Ascending aorta (tissue), 2 donors: ENCODE measurements at regions of chr6 and their contacts with region 1.

Region 1: GRCh38 chr6:168388641-168389381 is 52.2 kb upstream of the SMOC2 start:
- DNase-seq: no peak
- H3K4me3 ChIP-seq: no peak overlapping the region
- H3K27ac ChIP-seq: no peak overlapping the region
- H3K4me1 ChIP-seq: peaks cover 0 to 10% of the 10 kb centered on the region in 2 donors
- H3K27me3 ChIP-seq: no peaks in the 10 kb centered on the region
- CTCF ChIP-seq: no peak

Region 2: GRCh38 chr6:168440520-168441433 is 52.0 kb after region 1 on chr6 and contains the start of gene SMOC2:
- intact Hi-C with region 1: loop called (anchors 2 kb)
- DNase-seq: peak in 1 of 2 donors; percentile 72
- H3K4me3 ChIP-seq: peak within 1 kb of the TSS; percentile 59 to 93
- H3K27ac ChIP-seq: peak within 1 kb of the TSS; percentile 75 to 88
- H3K4me1 ChIP-seq: peaks cover 8 to 16% of the 10 kb centered on the region in 2 donors
- H3K27me3 ChIP-seq: no peaks in the 10 kb centered on the region
- CTCF ChIP-seq: no peak
- total RNA-seq, gene SMOC2: 102 TPM

Region 3: DNA sequence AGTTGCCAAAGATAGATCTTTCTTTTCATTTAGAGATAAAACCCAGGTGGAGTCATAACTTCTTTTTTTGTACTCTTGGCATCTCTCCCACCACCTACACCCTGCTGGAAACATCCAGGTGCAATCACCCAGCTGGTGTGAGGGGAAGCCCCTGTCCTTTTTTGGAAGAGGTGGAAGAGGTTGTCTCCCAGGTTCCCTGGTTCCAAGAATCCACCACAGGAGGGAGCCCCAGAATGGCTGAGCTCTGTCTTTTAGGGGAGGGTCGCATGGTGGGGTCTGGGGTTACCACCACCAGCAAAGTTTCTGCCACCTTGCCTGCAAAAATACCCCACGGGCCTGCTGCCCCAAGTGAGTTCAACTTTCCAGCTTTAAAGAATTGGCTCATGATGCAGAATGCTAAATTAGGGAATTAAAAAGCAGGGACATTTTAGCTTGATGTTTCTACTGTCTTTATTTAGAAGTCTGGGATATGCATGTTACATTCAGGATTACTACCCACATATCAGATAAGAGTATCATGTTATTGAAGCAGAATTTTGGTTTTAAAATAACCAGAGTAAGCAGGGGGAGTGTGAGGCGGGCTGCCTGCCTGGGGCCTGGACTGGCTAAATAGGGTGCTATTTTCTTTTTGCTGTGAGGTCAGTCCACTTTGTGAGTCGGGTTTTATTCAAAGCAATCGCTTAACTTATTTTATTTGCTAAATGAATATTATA is 63.1 kb after region 1 on chr6:
- intact Hi-C with region 1: loop called (anchors 5 kb)
- DNase-seq: no peak
- H3K4me3 ChIP-seq: peak overlapping the region in 1 of 2 donors; percentile 36
- H3K27ac ChIP-seq: peak overlapping the region; percentile 90 to 94
- H3K4me1 ChIP-seq: peaks cover 24 to 46% of the 10 kb centered on the region in 2 donors
- H3K27me3 ChIP-seq: no peaks in the 10 kb centered on the region
- CTCF ChIP-seq: peak in 2 of 3 experiments; percentile 8 to 43

Region 4: GRCh38 chr6:168526841-168527281 is 138.1 kb after region 1 on chr6:
- intact Hi-C with region 1: loop called (anchors 5 kb)
- DNase-seq: peak in 1 of 2 donors; percentile 83
- H3K4me3 ChIP-seq: no peak overlapping the region
- H3K27ac ChIP-seq: peak overlapping the region; percentile 90 to 95
- H3K4me1 ChIP-seq: peaks cover 14 to 32% of the 10 kb centered on the region in 2 donors
- H3K27me3 ChIP-seq: no peaks in the 10 kb centered on the region
- CTCF ChIP-seq: no peak

Region 5: GRCh38 chr6:168542301-168542700 is 153.5 kb after region 1 on chr6:
- intact Hi-C with region 1: loop called (anchors 2 kb)
- DNase-seq: no peak
- H3K4me3 ChIP-seq: no peak overlapping the region
- H3K27ac ChIP-seq: peak overlapping the region; percentile 67 to 71
- H3K4me1 ChIP-seq: peaks cover 13 to 47% of the 10 kb centered on the region in 2 donors
- H3K27me3 ChIP-seq: no peaks in the 10 kb centered on the region
- CTCF ChIP-seq: no peak

Region 6: DNA sequence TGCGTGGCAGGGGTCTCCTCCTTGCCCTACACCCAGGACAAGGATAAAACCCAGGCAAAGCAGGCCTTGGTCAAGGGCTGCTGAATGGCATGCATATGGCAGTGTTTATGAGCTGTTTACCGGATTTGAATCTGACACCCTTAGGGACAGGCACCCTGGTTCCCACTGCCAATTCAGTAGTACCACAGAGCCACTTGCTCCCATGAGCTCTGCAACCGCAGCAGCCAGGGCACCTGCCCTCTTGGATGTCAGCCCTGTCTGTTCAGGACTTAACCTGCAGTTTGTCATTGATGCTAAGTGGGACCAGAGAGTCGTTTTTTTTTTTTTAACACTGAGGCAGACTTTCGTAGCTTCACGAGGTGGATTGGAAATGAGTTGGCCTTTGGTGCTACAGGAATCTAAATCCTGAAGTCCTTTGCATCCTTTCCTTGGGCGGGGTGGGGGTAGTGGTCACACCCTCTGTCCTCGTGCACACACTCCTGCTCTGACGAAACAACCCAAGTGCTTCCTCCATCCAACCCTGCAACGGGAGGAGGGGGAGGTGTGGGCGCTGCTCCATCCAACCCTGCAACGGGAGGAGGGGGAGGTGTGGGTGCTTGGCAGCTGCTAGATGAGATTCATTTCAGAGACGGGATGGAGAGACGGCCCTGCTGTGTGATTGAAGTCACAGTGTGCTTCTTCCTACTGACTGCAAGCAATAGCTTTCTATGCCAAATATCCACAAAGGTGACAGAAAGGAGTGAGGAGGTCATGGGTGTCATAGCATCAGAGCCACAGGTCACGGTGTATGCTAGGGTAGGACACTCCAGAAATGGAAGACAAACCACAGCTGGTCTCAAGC is 218.7 kb after region 1 on chr6:
- intact Hi-C with region 1: loop called (anchors 5 kb)
- DNase-seq: no peak
- H3K4me3 ChIP-seq: no peak overlapping the region
- H3K27ac ChIP-seq: peak overlapping the region in 1 of 2 donors; percentile 1
- H3K4me1 ChIP-seq: no peaks in the 10 kb centered on the region
- H3K27me3 ChIP-seq: no peaks in the 10 kb centered on the region
- CTCF ChIP-seq: no peak

Region 7: GRCh38 chr6:169292338-169293124 is 903.7 kb after region 1 on chr6:
- intact Hi-C with region 1: no loop called
- DNase-seq: no peak
- H3K4me3 ChIP-seq: no peak overlapping the region
- H3K27ac ChIP-seq: no peak overlapping the region
- H3K4me1 ChIP-seq: no peaks in the 10 kb centered on the region
- H3K27me3 ChIP-seq: no peaks in the 10 kb centered on the region
- CTCF ChIP-seq: no peak